Activated CD4-positive, alpha-beta T cell treated with anti-CD3 and anti-CD28 coated beads for 36 hours (primary cell): ENCODE measurements at regions of chr15 and their contacts with region 1.

Region 1: GRCh38 chr15:50134520-50135024 is 15.5 kb upstream of the ATP8B4 start:
- DNase-seq: no peak
- ATAC-seq: peak; percentile 47
- H3K4me3 Mint-ChIP-seq: peak overlapping the region; percentile 24
- H3K27ac Mint-ChIP-seq: peak overlapping the region; percentile 96
- H3K4me1 Mint-ChIP-seq: peaks cover 53% of the 10 kb centered on the region
- H3K27me3 Mint-ChIP-seq: no peaks in the 10 kb centered on the region

Region 2: GRCh38 chr15:48925714-48926223 is 1208.8 kb before region 1 on chr15:
- CTCF ChIA-PET with region 1: no interaction called
- POLR2A ChIA-PET with region 1: no interaction called
- intact Hi-C with region 1: loop called in 1 of 2 experiments (anchors 5 kb)
- DNase-seq: peak; percentile 30
- ATAC-seq: peak; percentile 50
- H3K4me3 Mint-ChIP-seq: peak overlapping the region; percentile 15
- H3K27ac Mint-ChIP-seq: peak overlapping the region; percentile 65
- H3K4me1 Mint-ChIP-seq: peaks cover 57% of the 10 kb centered on the region
- H3K27me3 Mint-ChIP-seq: peaks cover 20% of the 10 kb centered on the region

Region 3: GRCh38 chr15:49155110-49155833 is 979.3 kb before region 1 on chr15 and contains the start of gene COPS2:
- CTCF ChIA-PET with region 1: no interaction called
- POLR2A ChIA-PET with region 1: no interaction called
- intact Hi-C with region 1: loop called in 1 of 2 experiments (anchors 2 kb)
- DNase-seq: peak; percentile 95
- ATAC-seq: peak; percentile 96
- H3K4me3 Mint-ChIP-seq: peak within 1 kb of the TSS; percentile 96
- H3K27ac Mint-ChIP-seq: peak within 1 kb of the TSS; percentile 94
- H3K4me1 Mint-ChIP-seq: peaks cover 37% of the 10 kb centered on the region
- H3K27me3 Mint-ChIP-seq: no peaks in the 10 kb centered on the region
- total RNA-seq, gene COPS2: 82.6 to 95.9 TPM

Region 4: DNA sequence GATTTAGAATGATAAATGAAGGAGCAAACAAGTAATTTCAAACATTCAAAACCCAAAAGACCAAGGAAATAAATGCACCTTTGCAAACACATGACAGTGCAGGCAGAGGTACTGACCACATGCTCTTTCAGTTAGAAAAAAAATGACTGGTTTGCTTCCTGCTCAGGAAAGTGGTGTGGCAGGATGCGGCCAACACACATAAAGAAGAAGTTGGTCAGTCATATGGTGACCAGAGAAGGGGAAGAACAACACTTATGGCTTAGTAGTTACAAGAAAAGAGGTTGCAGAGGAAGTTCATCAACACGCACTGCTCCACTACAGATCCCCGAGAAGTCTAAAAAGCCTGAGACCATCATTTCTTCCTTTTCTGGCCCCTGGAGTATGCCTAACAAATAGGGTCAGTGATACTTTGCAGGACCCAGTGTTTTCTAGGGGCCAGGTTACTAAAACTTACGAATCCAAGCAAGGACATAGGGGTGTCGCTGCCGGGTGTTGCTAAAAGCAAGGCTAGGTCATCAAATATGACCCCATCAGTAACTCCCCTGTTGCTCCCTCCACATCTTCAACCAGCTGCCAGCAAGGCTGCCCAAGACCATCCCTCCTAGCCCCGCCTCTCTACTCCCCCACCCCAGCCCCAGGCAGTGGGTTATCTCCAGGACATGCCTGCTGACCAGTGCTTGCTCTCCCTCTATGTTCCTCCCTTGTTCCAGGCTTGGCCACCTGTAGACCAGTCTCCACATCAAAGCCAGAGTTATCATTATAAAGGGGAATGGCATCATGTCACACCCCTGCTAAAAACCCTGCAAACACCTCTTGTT is 26.8 kb before region 1 on chr15:
- CTCF ChIA-PET with region 1: interaction called, 3 read pairs
- POLR2A ChIA-PET with region 1: no interaction called
- intact Hi-C with region 1: loop called (anchors 1 kb)
- DNase-seq: peak; percentile 53
- ATAC-seq: peak; percentile 85
- H3K4me3 Mint-ChIP-seq: no peak overlapping the region
- H3K27ac Mint-ChIP-seq: peak overlapping the region; percentile 77
- H3K4me1 Mint-ChIP-seq: peaks cover 38% of the 10 kb centered on the region
- H3K27me3 Mint-ChIP-seq: peaks cover 2% of the 10 kb centered on the region

Region 5: GRCh38 chr15:50260969-50261496 is 126.5 kb after region 1 on chr15:
- CTCF ChIA-PET with region 1: interaction called, 4 read pairs
- POLR2A ChIA-PET with region 1: interaction called, 11 read pairs
- intact Hi-C with region 1: loop called (anchors 1 kb)
- DNase-seq: no peak
- ATAC-seq: peak; percentile 17
- H3K4me3 Mint-ChIP-seq: peak overlapping the region; percentile 37
- H3K27ac Mint-ChIP-seq: peak overlapping the region; percentile 95
- H3K4me1 Mint-ChIP-seq: peaks cover 69% of the 10 kb centered on the region
- H3K27me3 Mint-ChIP-seq: no peaks in the 10 kb centered on the region

Region 6: GRCh38 chr15:50765195-50765973 is 630.8 kb after region 1 on chr15 and contains the start of gene SPPL2A:
- CTCF ChIA-PET with region 1: no interaction called
- POLR2A ChIA-PET with region 1: interaction called, 4 read pairs
- intact Hi-C with region 1: loop called (anchors 1 to 10 kb)
- DNase-seq: peak; percentile 96
- ATAC-seq: peak; percentile 90
- H3K4me3 Mint-ChIP-seq: peak within 1 kb of the TSS; percentile 82
- H3K27ac Mint-ChIP-seq: peak within 1 kb of the TSS; percentile 99
- H3K4me1 Mint-ChIP-seq: peaks cover 50% of the 10 kb centered on the region
- H3K27me3 Mint-ChIP-seq: no peaks in the 10 kb centered on the region
- total RNA-seq, gene SPPL2A: 53.1 to 66.1 TPM